Activated CD4-positive, alpha-beta T cell treated with anti-CD3 and anti-CD28 coated beads, Interleukin-2, amount 10 ng/mL, durations not matched to agents 24 days and 14 days (primary cell): ENCODE measurements at regions of chr7 and their contacts with region 1.

Region 1: GRCh38 chr7:50359995-50360925 is 55.7 kb downstream of the IKZF1 start:
- DNase-seq: peak; percentile 94
- H3K4me3 Mint-ChIP-seq: peak overlapping the region; percentile 81
- H3K27ac Mint-ChIP-seq: peak overlapping the region; percentile 99
- H3K4me1 Mint-ChIP-seq: peaks cover 92% of the 10 kb centered on the region
- H3K27me3 Mint-ChIP-seq: no peaks in the 10 kb centered on the region

Region 2: DNA sequence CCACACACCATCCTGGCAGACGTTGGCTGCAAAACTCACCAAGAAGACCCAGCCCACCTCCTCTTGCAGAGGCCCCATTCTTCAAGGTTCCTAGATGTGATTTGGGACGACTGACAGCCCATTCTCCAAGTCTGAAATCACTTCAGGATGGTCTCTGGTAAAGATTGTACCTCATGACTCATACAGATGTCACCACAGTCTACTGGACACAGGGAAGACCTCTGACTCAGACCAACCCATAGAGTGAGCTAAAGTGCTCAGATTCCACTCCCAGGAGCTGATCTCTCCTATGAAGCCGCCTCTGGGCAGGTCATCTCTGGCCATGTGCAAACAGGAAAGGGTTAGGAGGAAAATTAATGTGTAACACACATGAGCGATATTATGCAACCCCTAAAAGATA is 689.3 kb before region 1 on chr7:
- intact Hi-C with region 1: no loop called
- DNase-seq: no peak
- H3K4me3 Mint-ChIP-seq: no peak overlapping the region
- H3K27ac Mint-ChIP-seq: no peak overlapping the region
- H3K4me1 Mint-ChIP-seq: no peaks in the 10 kb centered on the region
- H3K27me3 Mint-ChIP-seq: no peaks in the 10 kb centered on the region

Region 3: DNA sequence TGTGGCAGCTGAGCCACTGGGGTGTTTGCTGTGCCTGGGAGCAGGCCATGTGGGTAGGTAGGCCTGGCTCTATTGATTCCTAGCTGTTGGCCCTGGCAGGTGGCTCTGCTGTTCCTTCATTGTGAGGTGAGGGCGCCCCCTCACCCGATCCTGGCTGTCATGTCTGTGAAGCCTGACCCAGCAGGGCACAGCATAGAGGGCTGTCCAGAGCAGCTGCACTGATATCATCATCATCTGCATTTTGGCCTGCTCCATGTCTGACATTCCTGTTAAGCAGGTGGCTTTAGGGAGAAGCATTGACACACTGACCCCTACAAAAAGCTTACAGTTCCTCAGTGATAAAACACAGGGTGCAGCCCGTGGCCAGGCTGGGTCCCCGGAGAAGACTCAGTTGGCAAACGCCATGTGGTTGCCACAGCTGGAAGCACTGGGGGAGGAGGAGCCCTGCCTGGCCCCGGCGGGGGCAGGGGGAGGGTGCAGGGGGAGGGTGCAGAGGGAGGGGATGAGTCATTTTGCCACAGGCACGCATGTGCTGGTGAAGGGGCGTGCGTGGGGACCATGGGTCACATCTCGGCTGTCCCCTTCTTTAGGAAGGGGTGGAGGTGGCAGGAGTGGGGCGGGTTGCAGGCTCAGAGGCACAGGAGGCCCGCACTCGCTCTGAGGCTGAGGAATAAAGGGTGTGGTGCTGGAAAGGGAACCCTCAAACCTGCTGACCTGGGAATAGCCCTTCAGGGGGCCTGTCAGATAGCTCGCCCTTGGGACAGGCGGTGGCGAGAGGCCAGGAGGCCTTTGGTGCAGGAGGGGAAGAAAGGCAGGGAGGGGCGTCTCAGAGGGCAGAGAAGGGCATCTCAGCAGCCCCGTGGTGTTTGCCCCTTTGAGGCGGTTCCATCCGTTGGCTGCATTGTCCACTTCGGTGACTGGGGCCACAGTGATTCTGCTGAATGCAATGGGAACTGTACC is 24.2 kb before region 1 on chr7:
- intact Hi-C with region 1: loop called (anchors 1 kb)
- DNase-seq: peak; percentile 92
- H3K4me3 Mint-ChIP-seq: no peak overlapping the region
- H3K27ac Mint-ChIP-seq: no peak overlapping the region
- H3K4me1 Mint-ChIP-seq: peaks cover 63% of the 10 kb centered on the region
- H3K27me3 Mint-ChIP-seq: no peaks in the 10 kb centered on the region